HepG2 (cell line): ENCODE measurements at regions of chr6 and their contacts with region 1.

Region 1: DNA sequence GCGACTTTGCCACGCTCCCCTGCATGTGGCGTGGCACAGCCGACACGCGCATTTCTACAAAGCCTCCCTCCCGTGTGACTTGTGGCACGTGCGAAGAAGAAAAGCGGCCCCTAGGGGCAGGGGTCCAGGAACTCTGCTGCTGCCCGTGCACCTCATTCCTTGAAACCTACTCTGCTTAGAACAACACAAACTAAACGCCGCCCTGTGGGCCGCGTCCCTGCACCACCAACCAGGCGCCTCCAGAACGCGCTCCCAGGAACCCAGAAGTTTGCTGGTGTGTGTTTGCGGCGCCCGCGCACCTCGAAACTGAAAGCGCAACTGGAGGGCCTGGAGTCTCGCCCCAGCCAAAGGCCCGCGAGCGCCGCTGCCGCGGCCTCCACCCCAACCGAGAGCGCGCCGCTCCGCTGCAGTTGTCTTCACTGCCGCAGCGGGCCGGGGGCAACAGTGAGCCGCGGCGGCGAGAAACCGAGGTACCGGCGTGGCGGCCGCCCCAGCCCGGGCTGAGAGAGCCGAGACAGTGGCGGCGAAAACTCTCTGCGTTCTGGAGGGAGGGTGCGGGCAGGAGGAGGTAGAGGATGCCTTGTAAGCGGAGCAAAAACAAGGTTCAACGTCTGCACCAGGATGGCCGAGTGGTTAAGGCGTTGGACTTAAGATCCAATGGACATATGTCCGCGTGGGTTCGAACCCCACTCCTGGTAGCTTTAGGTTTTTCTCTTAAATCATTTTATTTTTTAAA is 65.8 kb downstream of the STX11 start:
- DNase-seq: peak; percentile 94
- ATAC-seq: peak; percentile 92
- H3K4me3 ChIP-seq: peak overlapping the region; percentile 68 to 89 (median 82)
- H3K27ac ChIP-seq: peak overlapping the region; percentile 81
- H3K4me1 ChIP-seq: peaks cover 23% of the 10 kb centered on the region
- H3K27me3 ChIP-seq: peaks cover 0 to 2% of the 10 kb centered on the region in 2 experiments; a peak in 1 of 5 replicates
- CTCF ChIP-seq: peak; percentile 89
- EP300 ChIP-seq: peak; percentile 51 to 71; a peak in 3 of 4 replicates
- POLR2A ChIP-seq: peak in 1 of 2 experiments; percentile 60; a peak in 3 of 4 replicates
- RAD21 ChIP-seq: peak; percentile 97

Region 2: DNA sequence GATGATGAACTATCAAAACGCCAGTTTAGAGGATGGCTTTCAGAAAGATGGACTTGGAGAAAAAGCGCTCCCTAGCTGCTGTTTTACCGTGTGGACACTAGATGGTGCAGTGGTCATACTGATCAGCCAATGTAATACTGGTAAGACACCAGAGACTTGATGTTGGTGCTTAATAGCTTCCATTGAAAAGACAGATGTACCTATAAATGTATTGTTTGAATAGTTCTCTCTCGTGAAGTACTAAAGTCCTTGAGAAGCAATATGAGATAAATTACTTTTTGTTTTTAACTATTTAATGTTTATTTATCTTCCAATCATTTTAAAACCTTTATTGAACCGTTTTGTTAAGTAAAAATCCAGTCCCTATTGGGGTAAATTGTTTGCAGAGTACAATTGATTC is 640.7 kb before region 1 on chr6:
- CTCF ChIA-PET with region 1: no interaction called
- POLR2A ChIA-PET with region 1: no interaction called
- in situ Hi-C with region 1: no loop called
- intact Hi-C with region 1: loop called (anchors 1 kb)
- DNase-seq: peak; percentile 83
- ATAC-seq: peak; percentile 86
- H3K4me3 ChIP-seq: no peak overlapping the region
- H3K27ac ChIP-seq: no peak overlapping the region
- H3K4me1 ChIP-seq: no peaks in the 10 kb centered on the region
- H3K27me3 ChIP-seq: no peaks in the 10 kb centered on the region
- CTCF ChIP-seq: peak; percentile 94
- EP300 ChIP-seq: no peak
- POLR2A ChIP-seq: no peak
- RAD21 ChIP-seq: peak; percentile 95

Region 3: GRCh38 chr6:144104898-144105487 is 111.1 kb before region 1 on chr6:
- CTCF ChIA-PET with region 1: interaction called, 10 read pairs
- POLR2A ChIA-PET with region 1: no interaction called
- in situ Hi-C with region 1: no loop called
- intact Hi-C with region 1: loop called (anchors 1 kb)
- DNase-seq: peak; percentile 74
- ATAC-seq: peak; percentile 86
- H3K4me3 ChIP-seq: no peak overlapping the region
- H3K27ac ChIP-seq: no peak overlapping the region
- H3K4me1 ChIP-seq: no peaks in the 10 kb centered on the region
- H3K27me3 ChIP-seq: no peaks in the 10 kb centered on the region
- CTCF ChIP-seq: peak; percentile 84
- EP300 ChIP-seq: no peak
- POLR2A ChIP-seq: no peak
- RAD21 ChIP-seq: peak; percentile 71

Region 4: GRCh38 chr6:144265390-144265789 is 49.3 kb after region 1 on chr6:
- CTCF ChIA-PET with region 1: no interaction called
- POLR2A ChIA-PET with region 1: no interaction called
- in situ Hi-C with region 1: no loop called
- intact Hi-C with region 1: loop called (anchors 1 kb)
- DNase-seq: peak; percentile 67
- ATAC-seq: peak; percentile 58
- H3K4me3 ChIP-seq: peak overlapping the region; percentile 11 to 51 (median 51); a peak in 4 of 6 replicates
- H3K27ac ChIP-seq: no peak overlapping the region
- H3K4me1 ChIP-seq: peaks cover 49% of the 10 kb centered on the region
- H3K27me3 ChIP-seq: no peaks in the 10 kb centered on the region
- CTCF ChIP-seq: no peak
- EP300 ChIP-seq: no peak
- POLR2A ChIP-seq: no peak
- RAD21 ChIP-seq: no peak

Region 5: GRCh38 chr6:144482142-144482541 is 266.0 kb after region 1 on chr6:
- CTCF ChIA-PET with region 1: interaction called, 13 read pairs
- POLR2A ChIA-PET with region 1: no interaction called
- in situ Hi-C with region 1: no loop called
- intact Hi-C with region 1: loop called (anchors 2 kb)
- DNase-seq: peak; percentile 69
- ATAC-seq: peak; percentile 80
- H3K4me3 ChIP-seq: no peak overlapping the region
- H3K27ac ChIP-seq: no peak overlapping the region
- H3K4me1 ChIP-seq: peaks cover 14% of the 10 kb centered on the region
- H3K27me3 ChIP-seq: no peaks in the 10 kb centered on the region
- CTCF ChIP-seq: peak; percentile 73
- EP300 ChIP-seq: no peak
- POLR2A ChIP-seq: no peak
- RAD21 ChIP-seq: no peak